Activated T-helper 1 cell treated with anti-CD3 and anti-CD28 coated beads, Interleukin-12 subunit alpha, Interleukin-12 subunit beta, Interleukin-2, Interleukin-4 antibody, amounts not matched to agents 30 ng/mL and 10 ng/mL and 1 ng/mL, durations not matched to agents 14 hours and 24 hours and 36 hours (primary cell): ENCODE measurements at regions of chr5 and their contacts with region 1.

Region 1: DNA sequence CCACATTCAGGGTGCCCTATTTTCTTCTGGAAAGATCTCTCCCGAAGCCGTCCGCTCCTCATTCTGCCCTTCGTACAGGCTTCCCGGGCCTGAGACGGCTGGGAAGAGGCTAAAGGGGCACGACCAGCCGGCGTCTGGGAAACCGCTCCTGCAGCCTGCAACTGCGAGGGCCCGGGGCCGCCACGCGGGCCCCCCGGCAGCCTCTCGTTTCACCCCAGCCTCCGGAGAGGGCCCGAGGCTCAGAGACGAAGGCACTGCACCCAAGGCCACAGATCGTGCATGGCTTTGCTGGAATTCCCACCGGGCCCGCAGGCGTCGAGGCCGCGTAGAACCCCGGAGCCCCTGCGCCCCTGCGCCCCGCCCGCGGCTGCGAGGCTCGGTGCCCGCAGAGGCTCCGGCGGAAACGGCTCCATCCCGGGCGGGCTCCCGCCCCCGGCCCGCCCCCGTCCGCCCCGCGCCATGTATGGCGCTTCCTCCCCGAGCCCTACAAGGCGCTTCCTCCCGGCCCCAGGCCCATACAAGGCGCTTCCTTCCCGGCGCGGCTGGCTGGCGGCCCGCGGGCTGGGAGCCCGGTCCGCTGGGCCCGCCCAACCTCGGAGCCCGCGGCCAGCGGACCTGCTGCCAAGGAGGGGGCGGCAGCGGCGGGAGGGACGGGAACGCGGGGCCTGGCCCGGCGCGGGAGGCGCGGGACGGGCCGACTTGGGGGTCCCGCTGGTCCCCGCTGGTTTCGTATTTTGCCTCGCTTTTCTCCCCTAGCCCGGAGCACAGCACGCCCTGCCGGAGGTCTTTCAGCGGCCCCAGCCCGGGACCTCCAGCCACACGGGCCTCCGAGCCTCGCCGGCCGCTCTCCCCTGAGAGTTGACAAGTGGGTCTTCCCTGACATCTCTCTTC is 26.6 kb downstream of the EGR1 start:
- DNase-seq: peak; percentile 83
- H3K4me3 Mint-ChIP-seq: peak overlapping the region; percentile 89
- H3K27ac Mint-ChIP-seq: peak overlapping the region; percentile 68
- H3K4me1 Mint-ChIP-seq: peaks cover 8% of the 10 kb centered on the region
- H3K27me3 Mint-ChIP-seq: peaks cover 34% of the 10 kb centered on the region

Region 2: GRCh38 chr5:138438724-138439476 is 53.0 kb before region 1 on chr5 and contains the start of gene REEP2:
- intact Hi-C with region 1: loop called (anchors 1 kb)
- DNase-seq: peak; percentile 53
- H3K4me3 Mint-ChIP-seq: peak within 1 kb of the TSS; percentile 77
- H3K27ac Mint-ChIP-seq: peak within 1 kb of the TSS; percentile 67
- H3K4me1 Mint-ChIP-seq: peaks cover 13% of the 10 kb centered on the region
- H3K27me3 Mint-ChIP-seq: peaks cover 6% of the 10 kb centered on the region
- total RNA-seq, gene REEP2: 5.1 and 5.4 TPM in 2 replicates

Region 3: DNA sequence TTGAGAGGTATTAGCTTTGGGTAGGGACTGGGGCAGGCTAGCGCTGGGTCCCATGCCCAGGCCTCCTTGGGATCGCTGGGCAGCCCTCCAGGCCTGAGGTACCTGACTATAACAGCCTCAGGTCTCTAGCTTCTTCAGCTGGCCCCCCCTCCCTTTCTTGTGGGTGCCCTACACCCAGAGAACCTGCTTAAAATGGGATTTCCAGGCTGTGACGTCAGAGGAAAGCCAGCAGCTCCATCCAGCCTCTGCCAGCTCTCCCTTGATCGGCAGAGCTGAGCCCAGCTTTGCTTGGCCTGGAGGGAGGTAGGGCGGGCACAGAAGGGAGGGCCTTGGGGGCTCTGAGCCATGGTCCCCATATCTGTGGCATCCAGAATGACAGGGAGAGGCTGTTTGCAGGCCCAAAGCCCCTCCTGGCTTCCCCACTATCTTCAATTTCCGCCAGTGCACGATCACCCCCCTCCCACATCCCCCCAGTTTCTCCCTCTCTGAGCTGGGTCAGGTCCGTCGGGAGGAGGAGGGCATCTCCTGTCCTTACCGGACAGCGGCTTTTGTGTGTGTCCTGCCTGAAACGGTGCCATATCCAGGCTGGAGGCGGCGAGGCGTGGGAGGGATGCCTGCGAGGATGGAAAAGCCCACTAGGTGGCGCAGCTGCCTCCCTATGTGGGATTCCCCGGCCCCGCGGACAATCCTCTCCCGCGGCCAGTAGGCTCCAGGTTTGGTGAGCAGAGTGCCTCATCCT is 42.2 kb before region 1 on chr5:
- intact Hi-C with region 1: loop called (anchors 1 kb)
- DNase-seq: peak; percentile 74
- H3K4me3 Mint-ChIP-seq: peak overlapping the region; percentile 24
- H3K27ac Mint-ChIP-seq: peak overlapping the region; percentile 7
- H3K4me1 Mint-ChIP-seq: peaks cover 6% of the 10 kb centered on the region
- H3K27me3 Mint-ChIP-seq: peaks cover 6% of the 10 kb centered on the region

Region 4: DNA sequence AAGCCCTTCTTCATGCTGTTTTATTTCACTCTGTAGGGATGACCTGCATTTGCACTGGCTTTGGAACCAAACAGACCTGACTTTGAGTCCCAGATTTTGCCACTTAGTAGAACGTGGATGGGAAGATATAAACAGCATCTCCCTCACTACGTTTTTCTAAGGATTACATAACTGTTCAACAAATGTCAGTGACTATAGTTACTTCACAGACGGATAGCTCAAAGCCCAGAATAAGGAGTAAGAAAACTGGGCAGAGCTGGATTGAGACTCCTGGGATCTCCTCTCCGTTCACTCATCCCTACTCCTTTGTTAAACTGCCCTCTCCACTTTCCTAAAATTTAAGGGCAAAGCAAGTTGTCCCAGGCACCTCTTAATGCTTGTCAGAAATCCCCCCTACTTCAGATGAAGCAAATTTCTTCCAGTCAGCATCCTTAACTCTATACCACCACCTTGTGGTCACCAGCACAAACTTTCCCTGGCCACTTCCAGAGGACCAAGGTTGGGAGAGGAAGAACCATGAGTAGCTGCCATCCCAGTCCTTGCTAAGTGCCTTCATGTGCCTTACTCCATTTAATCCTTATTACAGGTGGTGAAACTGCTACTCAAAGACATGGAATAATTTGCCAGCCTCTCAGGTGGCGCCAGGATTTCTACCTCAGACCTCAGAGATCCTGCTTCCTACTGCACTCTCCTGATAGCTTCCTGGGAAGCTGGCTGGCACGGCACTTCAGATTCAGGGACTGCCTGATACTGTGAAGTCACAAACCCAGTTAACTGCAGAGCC is 11.8 kb after region 1 on chr5:
- intact Hi-C with region 1: loop called (anchors 1 kb)
- DNase-seq: no peak
- H3K4me3 Mint-ChIP-seq: no peak overlapping the region
- H3K27ac Mint-ChIP-seq: no peak overlapping the region
- H3K4me1 Mint-ChIP-seq: peaks cover 5% of the 10 kb centered on the region
- H3K27me3 Mint-ChIP-seq: no peaks in the 10 kb centered on the region

Region 5: GRCh38 chr5:138824924-138825863 is 333.3 kb after region 1 on chr5:
- intact Hi-C with region 1: no loop called
- DNase-seq: no peak
- H3K4me3 Mint-ChIP-seq: no peak overlapping the region
- H3K27ac Mint-ChIP-seq: no peak overlapping the region
- H3K4me1 Mint-ChIP-seq: no peaks in the 10 kb centered on the region
- H3K27me3 Mint-ChIP-seq: no peaks in the 10 kb centered on the region